ENCODE measurements at regions of chr1 and their contacts with region 1.

Region 1: DNA sequence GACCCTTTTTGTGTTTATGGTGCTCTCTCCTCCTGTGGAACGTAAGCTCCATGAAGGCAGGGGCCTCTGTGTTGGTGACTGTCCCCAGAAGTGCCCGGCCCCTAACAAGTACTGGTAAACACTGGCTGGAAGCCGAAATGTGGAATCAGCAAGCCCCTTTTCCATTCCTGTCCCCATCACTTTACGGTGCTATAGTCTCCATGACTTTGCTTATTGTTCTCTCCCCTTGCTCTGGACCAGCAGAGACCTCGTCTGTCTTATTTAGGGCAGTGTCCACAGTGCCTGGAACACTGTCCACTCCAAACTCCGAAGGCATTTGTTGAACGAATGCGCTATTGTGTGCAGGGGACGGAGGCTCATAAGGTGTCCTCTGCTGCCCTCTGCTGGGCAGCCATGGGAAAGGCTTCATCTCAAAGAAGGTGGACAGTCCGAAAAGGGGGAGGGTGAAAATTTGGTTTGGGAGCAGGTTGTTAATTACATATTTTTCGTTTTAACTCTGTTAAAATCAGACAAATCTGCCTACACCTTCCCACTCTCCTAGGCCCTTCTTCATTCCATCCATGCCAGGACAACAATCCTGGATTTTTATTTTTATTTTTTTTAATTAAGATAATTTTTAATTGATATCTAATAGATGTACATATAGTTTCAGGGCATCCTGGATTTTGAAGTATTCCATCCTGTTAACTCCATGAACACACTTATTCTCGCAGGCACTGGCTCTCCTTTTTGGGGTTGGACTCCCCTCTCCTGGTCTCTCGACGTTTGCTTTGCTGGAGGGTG is 115.6 kb downstream of the PGBD5 start:
- DNase-seq: peak; percentile 63 to 86
- ATAC-seq: peak; percentile 84 to 95 (median 95)
- H3K4me3 ChIP-seq: no peak overlapping the region
- H3K4me3 Mint-ChIP-seq: no peak overlapping the region
- H3K27ac ChIP-seq: no peak overlapping the region
- H3K27ac Mint-ChIP-seq: no peak overlapping the region
- H3K4me1 ChIP-seq: no peaks in the 10 kb centered on the region
- H3K4me1 Mint-ChIP-seq: peaks cover 5% of the 10 kb centered on the region in 2 donors
- H3K27me3 ChIP-seq: no peaks in the 10 kb centered on the region
- H3K27me3 Mint-ChIP-seq: peaks cover 0 to 7% of the 10 kb centered on the region in 2 donors
- CTCF ChIP-seq: peak; percentile 95

Region 2: DNA sequence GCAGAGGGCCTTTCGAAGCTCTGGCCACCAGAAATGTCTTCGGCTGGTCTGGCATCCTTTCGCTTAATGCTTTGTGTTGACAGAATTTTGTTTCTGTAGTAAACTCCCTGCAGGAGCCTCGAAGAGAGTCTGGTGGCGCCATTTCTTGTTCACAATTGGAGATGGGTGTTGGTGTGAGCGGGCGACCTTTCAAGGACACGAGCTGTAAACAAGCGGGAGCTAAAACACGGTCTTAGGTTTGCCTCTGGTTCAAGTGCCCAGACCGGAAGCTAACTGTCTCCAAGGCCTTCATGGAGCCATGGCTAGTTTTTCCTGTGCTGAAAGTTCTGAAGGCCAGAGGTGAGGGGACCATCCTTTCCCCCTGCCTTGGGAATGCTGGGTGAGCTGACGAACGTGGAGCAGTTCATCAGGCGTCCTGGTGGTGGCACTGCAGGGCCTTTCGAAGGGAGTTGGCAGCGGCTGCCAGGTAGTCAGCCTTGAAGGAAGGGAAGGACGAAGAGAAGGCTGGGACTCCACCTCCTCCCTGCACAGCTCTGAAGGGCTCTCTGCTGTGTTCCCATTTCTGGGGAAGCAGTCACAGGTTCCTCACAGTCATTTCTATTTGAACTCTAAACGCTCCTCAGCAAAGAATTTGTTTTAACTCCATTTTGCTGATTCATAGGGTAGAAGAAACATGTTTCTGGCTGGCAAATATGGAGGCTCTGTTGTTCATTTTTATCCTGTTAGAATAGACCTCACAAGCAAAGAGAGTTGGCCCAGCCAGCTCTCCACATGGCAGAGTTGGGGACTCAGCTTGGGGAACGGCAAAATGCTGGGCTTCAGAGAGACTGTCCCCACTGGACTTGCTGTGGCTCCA is 649.3 kb before region 1 on chr1:
- intact Hi-C with region 1: loop called (anchors 1 kb)
- DNase-seq: peak; percentile 53 to 80
- ATAC-seq: peak; percentile 60 to 76 (median 70)
- H3K4me3 ChIP-seq: no peak overlapping the region
- H3K4me3 Mint-ChIP-seq: no peak overlapping the region
- H3K27ac ChIP-seq: no peak overlapping the region
- H3K27ac Mint-ChIP-seq: no peak overlapping the region
- H3K4me1 ChIP-seq: peaks cover 13% of the 10 kb centered on the region
- H3K4me1 Mint-ChIP-seq: no peaks in the 10 kb centered on the region
- H3K27me3 ChIP-seq: no peaks in the 10 kb centered on the region
- H3K27me3 Mint-ChIP-seq: no peaks in the 10 kb centered on the region
- CTCF ChIP-seq: peak; percentile 73

Region 3: DNA sequence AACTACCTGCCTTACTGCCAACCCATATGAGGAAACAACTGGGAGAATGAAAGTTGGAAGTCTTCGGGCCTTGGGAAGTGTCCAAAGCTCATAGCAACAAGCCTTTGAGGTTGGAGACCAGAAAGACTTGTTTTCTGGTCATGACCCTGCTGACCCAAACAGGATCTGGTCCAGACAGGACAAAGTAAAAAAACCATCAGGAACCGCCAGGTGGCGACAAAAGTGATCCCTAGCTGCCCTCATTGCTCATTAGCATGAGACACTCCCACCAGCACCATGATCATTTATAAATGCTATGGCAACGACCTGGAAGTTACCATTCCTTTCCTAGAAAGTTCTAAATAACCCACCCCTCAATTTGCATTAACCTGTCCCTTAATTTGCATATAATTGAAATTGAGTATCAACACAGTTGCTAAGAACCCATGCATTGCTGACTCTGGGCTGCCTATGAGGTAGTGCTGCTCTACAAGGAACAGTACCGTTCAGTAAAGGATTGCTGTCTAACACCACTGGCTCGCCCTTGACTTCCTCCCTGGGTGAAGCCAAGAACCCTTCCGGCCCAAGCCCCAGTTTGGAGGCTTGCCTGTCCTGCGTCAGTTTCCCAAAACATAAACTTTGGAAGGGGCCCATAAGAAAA is 595.5 kb before region 1 on chr1:
- intact Hi-C with region 1: loop called (anchors 1 kb)
- DNase-seq: peak in 1 of 2 donors; percentile 57
- ATAC-seq: peak in 1 of 3 donors; percentile 28
- H3K4me3 ChIP-seq: no peak overlapping the region
- H3K4me3 Mint-ChIP-seq: no peak overlapping the region
- H3K27ac ChIP-seq: no peak overlapping the region
- H3K27ac Mint-ChIP-seq: no peak overlapping the region
- H3K4me1 ChIP-seq: no peaks in the 10 kb centered on the region
- H3K4me1 Mint-ChIP-seq: no peaks in the 10 kb centered on the region
- H3K27me3 ChIP-seq: no peaks in the 10 kb centered on the region
- H3K27me3 Mint-ChIP-seq: peaks cover 0 to 12% of the 10 kb centered on the region in 2 donors
- CTCF ChIP-seq: no peak

Region 4: DNA sequence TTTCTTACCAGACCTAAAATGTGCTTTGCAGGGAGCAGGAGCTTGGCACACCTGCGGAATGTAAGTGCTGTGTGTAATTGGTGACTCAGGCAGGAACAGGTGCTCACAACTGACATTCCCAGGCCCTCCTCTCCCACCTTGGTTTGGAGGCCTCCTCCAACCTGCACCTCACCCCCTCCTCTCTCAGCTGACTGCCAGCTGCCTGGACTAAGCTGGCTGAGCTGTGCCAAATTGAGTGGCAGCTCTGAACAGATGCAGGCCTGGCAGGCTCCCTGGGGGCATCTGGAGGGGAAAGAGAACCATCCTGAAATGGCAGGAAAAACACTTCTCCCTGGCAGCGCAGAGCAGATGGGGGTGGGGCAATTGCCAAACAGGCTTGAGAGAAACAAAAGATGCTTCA is 207.2 kb after region 1 on chr1:
- intact Hi-C with region 1: no loop called
- DNase-seq: no peak
- ATAC-seq: peak in 1 of 3 donors; percentile 30
- H3K4me3 ChIP-seq: no peak overlapping the region
- H3K4me3 Mint-ChIP-seq: no peak overlapping the region
- H3K27ac ChIP-seq: no peak overlapping the region
- H3K27ac Mint-ChIP-seq: no peak overlapping the region
- H3K4me1 ChIP-seq: no peaks in the 10 kb centered on the region
- H3K4me1 Mint-ChIP-seq: no peaks in the 10 kb centered on the region
- H3K27me3 ChIP-seq: no peaks in the 10 kb centered on the region
- H3K27me3 Mint-ChIP-seq: peaks cover 2 to 22% of the 10 kb centered on the region in 2 donors
- CTCF ChIP-seq: no peak